Activated naive CD4-positive, alpha-beta T cell treated with anti-CD3 and anti-CD28 coated beads for 36 hours (primary cell): ENCODE measurements at regions of chr6 and their contacts with region 1.

Region 1: DNA sequence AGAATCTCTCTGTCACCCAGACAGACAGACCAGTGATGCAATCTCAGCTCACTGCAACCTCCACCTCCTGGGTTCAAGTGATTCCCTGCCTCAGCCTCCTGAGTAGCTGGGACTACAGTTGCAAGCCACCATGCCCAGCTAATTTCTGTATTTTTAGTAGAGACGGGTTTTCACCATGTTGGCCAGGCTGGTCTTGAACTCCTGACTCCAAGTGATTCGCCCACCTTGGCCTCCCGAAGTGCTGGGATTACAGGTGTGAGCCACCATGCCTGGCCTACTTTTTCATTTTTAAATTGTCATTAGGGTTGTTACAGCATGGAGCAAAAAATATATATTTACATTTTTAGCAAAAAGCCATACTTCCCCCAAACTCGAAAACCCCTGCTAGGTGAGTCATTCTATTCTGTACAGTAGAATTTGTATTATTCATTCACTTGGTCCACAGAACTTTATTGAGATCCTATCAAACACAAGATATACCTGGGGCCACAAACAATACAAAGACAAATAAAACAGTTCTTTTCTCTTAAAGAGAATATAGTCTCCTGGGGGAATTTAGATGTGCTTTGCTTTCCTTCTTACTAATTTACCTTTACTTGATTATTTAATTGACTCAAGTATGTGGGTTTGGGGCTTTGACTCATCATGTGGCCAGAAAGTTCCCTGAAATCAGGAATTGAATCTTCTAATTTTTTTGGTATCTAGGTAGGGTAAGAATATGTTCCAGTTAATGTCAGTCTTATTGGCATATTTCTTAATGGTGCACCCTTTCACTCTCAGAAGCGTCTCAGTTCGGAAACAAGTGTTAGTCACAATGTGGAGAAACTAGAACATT is 16.6 kb upstream of the CCND3 start:
- DNase-seq: peak; percentile 76
- H3K4me3 Mint-ChIP-seq: peak overlapping the region; percentile 32
- H3K27ac Mint-ChIP-seq: peak overlapping the region; percentile 98
- H3K4me1 Mint-ChIP-seq: peaks cover 83% of the 10 kb centered on the region
- H3K27me3 Mint-ChIP-seq: no peaks in the 10 kb centered on the region

Region 2: DNA sequence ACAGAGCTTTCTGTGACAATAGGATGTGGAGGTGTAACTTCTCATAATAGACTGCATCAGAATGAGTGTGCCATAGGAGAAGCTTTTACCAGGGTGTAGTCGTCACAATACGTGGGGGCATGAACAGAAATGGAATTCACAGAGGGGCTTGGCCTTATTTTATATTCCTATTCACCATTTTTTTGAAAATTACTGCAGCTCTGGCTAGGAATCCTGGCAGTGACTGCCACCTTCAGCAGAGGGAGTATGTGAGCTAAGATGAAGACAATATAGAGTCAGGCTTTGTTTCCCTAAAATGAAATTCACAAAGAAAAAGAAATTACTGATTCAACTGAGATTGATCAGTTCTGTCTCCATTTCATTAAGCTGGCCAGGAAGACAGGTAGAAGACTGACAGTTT is 156.9 kb before region 1 on chr6:
- CTCF ChIA-PET with region 1: no interaction called
- intact Hi-C with region 1: no loop called
- DNase-seq: no peak
- H3K4me3 Mint-ChIP-seq: no peak overlapping the region
- H3K27ac Mint-ChIP-seq: no peak overlapping the region
- H3K4me1 Mint-ChIP-seq: no peaks in the 10 kb centered on the region
- H3K27me3 Mint-ChIP-seq: no peaks in the 10 kb centered on the region

Region 3: GRCh38 chr6:41941280-41942066 is 16.8 kb before region 1 on chr6 and contains the start of gene CCND3:
- CTCF ChIA-PET with region 1: interaction called, 7 read pairs
- intact Hi-C with region 1: loop called (anchors 1 kb)
- DNase-seq: peak; percentile 93
- H3K4me3 Mint-ChIP-seq: peak within 1 kb of the TSS; percentile 100
- H3K27ac Mint-ChIP-seq: peak within 1 kb of the TSS; percentile 99
- H3K4me1 Mint-ChIP-seq: peaks cover 47% of the 10 kb centered on the region
- H3K27me3 Mint-ChIP-seq: no peaks in the 10 kb centered on the region
- total RNA-seq, gene CCND3: 1,152 to 1,165 TPM

Region 4: DNA sequence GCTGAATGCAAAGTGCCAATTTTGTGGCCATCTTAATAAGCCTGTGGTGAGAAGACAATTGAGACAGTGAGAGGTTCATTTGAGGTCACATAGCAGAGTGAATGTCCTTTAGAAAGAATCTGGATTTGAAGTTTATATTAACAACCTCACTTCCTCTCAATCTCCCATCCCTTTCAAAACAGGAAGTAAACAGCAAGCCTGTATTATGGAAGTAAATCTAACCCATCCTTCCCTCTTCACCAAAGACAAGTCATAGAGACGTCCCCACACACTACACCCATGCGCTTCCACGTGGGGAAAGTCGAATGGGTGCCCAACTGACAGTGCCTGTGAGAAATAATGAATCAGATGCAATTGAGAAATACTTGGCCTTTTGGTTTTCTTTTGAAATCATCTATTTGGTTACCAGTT is 12.2 kb after region 1 on chr6:
- CTCF ChIA-PET with region 1: interaction called, 4 read pairs
- intact Hi-C with region 1: loop called (anchors 1 kb)
- DNase-seq: peak; percentile 82
- H3K4me3 Mint-ChIP-seq: peak overlapping the region; percentile 14
- H3K27ac Mint-ChIP-seq: peak overlapping the region; percentile 98
- H3K4me1 Mint-ChIP-seq: peaks cover 93% of the 10 kb centered on the region
- H3K27me3 Mint-ChIP-seq: no peaks in the 10 kb centered on the region

Region 5: DNA sequence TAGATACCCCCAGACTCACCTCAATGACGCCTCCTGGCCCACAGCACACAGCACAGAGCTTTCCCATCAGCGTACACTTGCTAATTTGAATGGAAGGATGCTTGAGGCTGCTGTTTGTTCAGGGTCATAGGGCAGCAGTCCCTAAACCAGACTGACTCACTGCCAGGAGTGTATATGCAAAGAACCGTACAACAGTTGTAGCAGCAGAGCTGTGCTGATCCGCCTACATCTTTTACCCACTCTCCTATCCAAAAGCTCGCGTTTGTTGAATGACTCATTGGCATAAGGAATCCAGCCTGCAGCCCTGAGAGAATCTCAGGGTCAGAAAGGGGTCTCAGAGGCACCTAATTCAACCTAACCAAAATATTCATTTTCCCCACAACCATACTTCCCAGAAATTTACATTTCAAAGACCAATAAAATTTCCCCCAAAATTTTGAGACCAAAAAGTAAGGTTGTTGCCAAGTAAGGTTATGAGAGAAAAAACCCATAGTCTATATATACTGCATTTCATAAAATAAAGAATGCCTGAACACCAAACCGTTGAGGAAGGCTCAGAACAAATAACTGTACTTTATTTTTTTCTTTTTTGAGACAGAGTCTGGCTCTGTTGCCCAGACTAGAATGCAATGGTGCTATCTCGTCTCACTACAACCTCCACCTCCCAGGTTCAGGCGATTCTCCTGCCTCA is 18.7 kb after region 1 on chr6:
- CTCF ChIA-PET with region 1: interaction called, 4 read pairs
- intact Hi-C with region 1: loop called (anchors 1 kb)
- DNase-seq: peak; percentile 81
- H3K4me3 Mint-ChIP-seq: peak overlapping the region; percentile 78
- H3K27ac Mint-ChIP-seq: peak overlapping the region; percentile 100
- H3K4me1 Mint-ChIP-seq: peaks cover 80% of the 10 kb centered on the region
- H3K27me3 Mint-ChIP-seq: no peaks in the 10 kb centered on the region

Region 6: DNA sequence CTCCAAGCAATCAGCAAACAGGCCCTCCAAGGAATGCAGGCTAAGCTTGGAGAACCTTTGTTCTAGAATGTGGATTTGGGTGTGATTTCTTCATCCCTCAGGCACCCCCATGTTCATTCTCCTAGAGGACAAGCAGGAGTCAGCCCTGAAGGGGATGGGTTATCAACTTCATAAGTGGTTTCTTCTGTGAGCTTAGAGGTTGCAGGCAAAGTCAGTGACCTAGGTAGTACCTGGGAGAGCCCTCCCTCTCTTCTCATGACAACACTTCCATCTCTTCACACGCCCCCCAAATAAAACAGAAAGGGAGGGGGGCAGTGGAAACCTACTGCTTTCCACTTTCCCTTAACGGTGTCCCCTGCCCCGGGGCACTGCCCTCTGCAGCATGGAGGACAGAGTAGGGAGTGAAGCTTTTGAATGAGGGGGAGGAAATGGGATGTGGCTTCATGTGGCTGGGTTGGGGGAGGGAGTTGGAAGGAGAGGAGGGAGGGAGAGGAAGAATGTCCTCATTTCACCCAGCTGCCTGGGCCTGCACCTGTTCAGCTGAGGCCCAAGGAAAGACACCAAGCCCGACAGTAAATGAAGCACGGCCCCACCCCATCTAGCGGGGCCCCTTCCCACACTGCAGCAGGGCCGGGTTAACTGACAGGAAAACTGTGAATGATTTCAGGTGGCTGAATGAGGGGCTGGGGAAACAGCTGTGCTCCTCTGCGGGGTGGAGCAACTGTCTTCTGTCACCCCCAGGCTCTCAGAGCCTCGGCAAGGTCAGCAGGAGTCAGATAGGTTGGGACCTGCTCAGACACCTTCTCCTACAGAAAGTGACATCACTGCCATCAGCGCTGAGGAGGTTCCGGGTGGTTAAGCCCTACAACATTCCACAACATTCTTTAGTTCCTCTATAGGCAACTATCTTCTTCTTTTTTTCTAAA is 52.0 kb after region 1 on chr6:
- CTCF ChIA-PET with region 1: interaction called, 4 read pairs
- intact Hi-C with region 1: loop called (anchors 1 kb)
- DNase-seq: peak; percentile 86
- H3K4me3 Mint-ChIP-seq: peak overlapping the region; percentile 83
- H3K27ac Mint-ChIP-seq: peak overlapping the region; percentile 100
- H3K4me1 Mint-ChIP-seq: peaks cover 76% of the 10 kb centered on the region
- H3K27me3 Mint-ChIP-seq: no peaks in the 10 kb centered on the region

Region 7: DNA sequence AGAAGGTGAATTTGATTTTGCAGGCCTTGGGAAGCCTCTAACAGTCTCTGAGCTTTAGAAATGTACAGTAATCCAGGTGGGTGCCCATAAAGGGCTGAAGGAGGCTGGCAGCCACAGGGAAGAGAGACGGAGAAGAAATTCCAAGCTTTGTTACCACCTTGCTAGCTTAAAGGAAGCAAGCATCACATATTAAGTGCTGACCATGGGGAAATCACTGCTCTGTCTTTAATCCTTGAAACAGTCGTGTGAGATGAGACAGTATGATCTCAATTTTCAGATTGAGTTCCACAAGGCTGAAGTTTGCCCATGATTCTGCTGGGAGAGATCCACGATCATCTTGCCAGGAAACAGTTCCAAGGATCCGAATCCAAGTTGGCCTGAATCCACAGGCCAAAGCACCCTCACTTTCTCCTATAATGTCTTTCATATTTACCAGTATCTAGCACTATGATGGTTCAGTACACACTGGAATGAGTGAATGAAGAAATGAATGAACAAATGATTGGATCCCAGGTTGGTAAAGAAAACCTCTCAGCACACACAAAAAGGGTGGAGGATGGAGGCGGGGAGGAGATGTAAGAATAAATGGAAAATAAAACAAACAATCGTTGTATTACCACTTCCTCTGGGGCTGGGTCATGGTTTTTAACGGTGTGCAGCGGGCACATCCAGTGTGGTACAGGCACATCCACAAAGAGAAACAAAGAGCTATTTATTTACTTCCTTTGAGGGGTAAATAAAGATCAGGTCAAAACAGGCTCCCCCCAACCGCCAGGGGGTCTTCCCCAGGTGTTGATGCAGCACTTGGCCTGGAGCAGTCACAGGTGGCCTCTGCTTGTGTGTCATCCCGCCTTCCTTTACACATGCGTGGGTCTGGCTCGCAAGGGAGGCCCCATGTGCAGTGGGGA is 63.9 kb after region 1 on chr6:
- CTCF ChIA-PET with region 1: interaction called, 3 read pairs
- intact Hi-C with region 1: loop called (anchors 1 kb)
- DNase-seq: peak; percentile 91
- H3K4me3 Mint-ChIP-seq: peak overlapping the region; percentile 63
- H3K27ac Mint-ChIP-seq: peak overlapping the region; percentile 99
- H3K4me1 Mint-ChIP-seq: peaks cover 89% of the 10 kb centered on the region
- H3K27me3 Mint-ChIP-seq: no peaks in the 10 kb centered on the region

Region 8: DNA sequence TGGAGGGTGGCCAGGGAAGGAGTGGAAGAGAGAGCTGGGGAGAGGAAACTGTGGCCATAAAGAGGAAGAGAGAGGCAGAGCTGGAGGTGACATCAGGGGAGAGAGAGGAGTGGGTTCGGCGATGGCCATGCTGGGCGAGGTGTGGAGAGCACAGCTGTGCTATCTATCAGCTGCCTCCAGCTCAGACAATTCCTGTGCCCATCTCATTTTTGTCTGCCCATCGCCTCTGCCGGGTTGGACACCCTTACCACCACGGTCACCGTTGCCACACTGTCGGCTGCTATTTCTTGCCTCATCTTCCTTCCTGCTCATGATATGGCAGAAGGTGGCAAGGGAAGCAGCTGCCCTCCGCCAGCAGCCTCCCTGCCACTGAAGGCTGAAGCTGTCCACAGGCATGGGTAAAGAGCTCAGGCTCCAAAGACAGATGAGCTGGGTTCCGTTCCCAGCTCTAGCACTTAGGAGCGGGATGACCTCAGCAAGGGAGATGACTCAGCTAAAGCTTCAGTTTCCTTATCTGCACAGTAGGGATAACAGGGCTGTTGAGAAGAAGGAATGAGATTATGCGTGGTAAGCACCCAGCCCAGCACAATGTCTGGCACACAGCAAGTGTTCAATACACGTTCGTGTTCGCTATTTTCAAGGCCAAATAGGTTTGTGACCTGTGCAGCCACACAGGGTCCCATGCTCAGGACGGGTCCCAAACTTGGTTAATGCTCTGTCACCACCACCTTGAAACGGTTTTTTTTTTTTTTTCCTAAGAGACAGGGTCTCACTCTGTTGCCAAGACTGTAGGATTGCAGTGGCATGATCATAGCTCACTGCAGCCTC is 70.2 kb after region 1 on chr6:
- CTCF ChIA-PET with region 1: interaction called, 3 read pairs
- intact Hi-C with region 1: loop called (anchors 1 kb)
- DNase-seq: peak; percentile 70
- H3K4me3 Mint-ChIP-seq: peak overlapping the region; percentile 68
- H3K27ac Mint-ChIP-seq: peak overlapping the region; percentile 99
- H3K4me1 Mint-ChIP-seq: peaks cover 94% of the 10 kb centered on the region
- H3K27me3 Mint-ChIP-seq: no peaks in the 10 kb centered on the region